Activated CD8-positive, alpha-beta T cell treated with anti-CD3 and anti-CD28 coated beads, Interleukin-2, amount 10 ng/mL, durations not matched to agents 7 days and 5 days (primary cell): ENCODE measurements at regions of chr17 and their contacts with region 1.

Region 1: DNA sequence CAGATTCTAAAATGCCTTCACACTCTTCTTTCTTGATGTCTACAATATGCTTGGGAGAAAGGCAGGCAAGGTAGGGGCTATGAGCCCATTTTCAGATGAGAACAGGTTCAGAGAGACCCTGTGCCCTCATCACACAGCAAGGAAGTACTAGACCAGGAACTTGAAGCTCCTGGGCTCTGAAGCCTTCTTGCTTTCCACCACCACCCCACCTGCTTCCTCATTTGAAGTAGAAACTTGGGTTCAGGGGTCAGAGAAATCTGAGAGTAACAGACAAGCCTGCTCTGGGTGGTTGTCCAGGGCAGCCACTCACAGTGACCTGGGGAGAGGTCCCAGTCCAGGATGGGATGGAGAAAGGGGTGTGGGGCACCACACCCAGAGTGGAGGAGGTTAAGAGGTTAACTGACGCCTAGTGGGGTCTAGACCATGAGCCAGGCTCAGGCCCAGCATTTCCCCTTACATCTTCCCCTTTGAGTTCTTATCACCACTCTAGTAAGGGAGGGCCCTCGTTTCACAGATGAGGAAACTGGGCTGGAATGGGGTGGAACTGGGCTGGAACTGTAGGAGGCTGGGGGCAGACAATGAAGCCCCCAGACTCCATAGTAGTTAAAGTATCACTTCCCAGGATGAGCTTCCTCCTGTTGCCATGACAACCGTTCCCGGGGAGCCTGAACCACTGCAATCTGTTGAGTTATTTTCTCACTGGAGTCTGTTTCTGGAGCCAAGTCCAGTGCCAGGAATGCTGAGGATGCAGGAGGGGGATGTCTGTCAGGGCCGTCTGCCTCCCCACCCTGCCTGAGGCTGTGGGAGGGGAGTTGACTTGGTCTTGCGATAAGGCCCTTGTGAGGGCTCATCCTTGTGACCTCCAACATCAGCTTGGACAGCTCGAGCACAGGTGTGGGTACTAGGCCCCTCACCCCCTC is 16.2 kb upstream of the PHF12 start:
- DNase-seq: no peak
- ATAC-seq: no peak
- H3K4me3 Mint-ChIP-seq: no peak overlapping the region
- H3K27ac Mint-ChIP-seq: peak overlapping the region; percentile 51
- H3K4me1 Mint-ChIP-seq: peaks cover 4% of the 10 kb centered on the region
- H3K27me3 Mint-ChIP-seq: peaks cover 15% of the 10 kb centered on the region

Region 2: DNA sequence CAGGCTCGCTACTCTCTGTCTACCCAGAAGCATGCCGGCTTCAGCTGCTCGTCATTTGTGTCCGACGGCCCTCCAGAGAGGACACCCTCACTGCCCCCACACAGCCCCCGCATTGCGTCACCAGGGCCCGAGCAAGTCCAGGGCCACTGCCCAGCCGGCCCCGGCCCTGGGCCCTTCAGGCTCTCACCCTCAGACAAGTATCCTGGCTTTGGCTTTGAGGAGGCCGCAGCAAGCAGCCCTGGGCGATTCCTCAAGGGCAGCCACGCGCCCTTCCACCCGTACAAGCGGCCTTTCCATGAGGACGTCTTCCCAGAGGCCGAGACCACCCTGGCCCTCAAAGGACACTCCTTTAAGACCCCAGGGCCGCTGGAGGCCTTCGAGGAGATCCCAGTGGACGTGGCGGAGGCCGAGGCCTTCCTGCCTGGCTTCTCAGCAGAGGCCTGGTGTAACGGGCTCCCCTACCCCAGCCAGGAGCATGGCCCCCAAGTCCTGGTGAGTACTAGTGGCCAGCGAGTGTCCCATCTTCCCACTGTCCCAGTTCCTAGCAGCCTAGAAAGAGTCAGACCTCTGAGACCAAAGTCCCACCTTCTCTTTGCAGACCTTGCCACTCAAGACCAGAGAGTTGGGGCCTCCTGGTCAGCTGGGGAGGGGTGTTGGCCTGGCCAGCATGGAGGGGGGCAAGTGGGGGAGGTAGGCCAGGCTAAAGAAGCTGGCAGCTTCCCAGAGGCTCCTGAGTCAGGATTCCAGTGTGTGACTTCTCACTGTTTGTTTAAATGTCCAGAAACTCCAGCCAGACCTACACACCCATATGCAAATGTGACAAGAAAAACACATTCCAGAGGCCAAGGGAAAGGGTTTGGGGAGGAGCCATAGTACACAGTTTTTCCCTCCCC is 442.8 kb before region 1 on chr17:
- CTCF ChIA-PET with region 1: no interaction called
- POLR2A ChIA-PET with region 1: no interaction called
- DNase-seq: no peak
- ATAC-seq: no peak
- H3K4me3 Mint-ChIP-seq: no peak overlapping the region
- H3K27ac Mint-ChIP-seq: no peak overlapping the region
- H3K4me1 Mint-ChIP-seq: no peaks in the 10 kb centered on the region
- H3K27me3 Mint-ChIP-seq: no peaks in the 10 kb centered on the region

Region 3: DNA sequence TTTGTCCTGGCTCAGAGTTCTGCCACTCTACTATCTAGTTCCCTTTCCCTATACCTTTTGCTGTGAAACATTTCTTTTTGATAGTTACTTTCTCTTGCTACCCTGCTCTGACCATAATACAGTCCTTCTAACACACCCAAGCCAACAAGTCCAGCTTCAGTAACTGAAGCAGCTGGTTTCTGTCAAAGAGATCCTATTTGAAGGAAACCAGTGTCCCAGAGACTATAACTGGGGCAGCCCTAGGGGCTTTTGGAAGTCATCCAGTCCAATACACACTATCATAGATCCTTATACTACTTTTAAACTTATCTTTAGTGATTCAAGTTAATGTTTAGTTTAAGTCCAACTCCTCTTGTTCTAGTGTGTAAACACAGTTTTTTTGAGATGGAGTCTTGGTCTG is 47.3 kb before region 1 on chr17:
- CTCF ChIA-PET with region 1: no interaction called
- POLR2A ChIA-PET with region 1: no interaction called
- DNase-seq: no peak
- ATAC-seq: no peak
- H3K4me3 Mint-ChIP-seq: no peak overlapping the region
- H3K27ac Mint-ChIP-seq: peak overlapping the region; percentile 1
- H3K4me1 Mint-ChIP-seq: peaks cover 16% of the 10 kb centered on the region
- H3K27me3 Mint-ChIP-seq: no peaks in the 10 kb centered on the region

Region 4: DNA sequence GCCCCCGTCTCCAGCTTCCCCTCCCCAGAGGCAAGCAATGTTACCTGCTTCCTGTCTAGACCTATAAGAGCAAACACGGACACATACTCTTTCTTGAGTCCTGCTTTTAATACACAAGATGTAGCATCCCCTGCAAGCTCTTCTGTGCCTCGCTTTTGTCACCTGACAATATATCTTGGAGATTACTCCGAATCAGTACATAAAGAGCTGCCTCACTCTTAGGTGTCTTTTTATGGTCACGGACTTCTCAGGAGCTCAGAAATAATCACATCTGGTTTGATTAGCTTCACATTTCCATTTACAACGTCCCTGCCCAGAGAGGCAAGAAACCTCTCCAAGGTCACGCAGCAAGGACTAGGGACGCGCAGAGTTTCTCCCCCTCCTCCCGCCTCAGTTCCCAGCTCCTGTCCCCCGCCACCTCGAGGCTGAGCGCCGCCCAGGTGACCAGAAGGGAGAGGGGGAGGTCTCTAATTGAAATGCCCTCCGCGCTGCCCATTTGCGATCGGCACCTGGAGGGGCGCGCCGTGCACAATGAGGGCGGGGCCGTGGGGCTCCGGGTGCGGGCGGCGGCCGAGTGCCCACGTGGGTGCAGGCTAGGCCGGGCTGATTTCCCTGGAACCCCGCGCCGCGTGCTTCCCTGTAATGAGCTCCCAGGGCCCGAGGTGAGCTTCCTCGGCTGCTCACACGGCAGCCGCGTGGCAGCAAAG is 52.1 kb after region 1 on chr17:
- CTCF ChIA-PET with region 1: interaction called, 16 read pairs
- POLR2A ChIA-PET with region 1: no interaction called
- DNase-seq: no peak
- ATAC-seq: peak; percentile 52
- H3K4me3 Mint-ChIP-seq: no peak overlapping the region
- H3K27ac Mint-ChIP-seq: no peak overlapping the region
- H3K4me1 Mint-ChIP-seq: peaks cover 8% of the 10 kb centered on the region
- H3K27me3 Mint-ChIP-seq: peaks cover 38% of the 10 kb centered on the region

Region 5: DNA sequence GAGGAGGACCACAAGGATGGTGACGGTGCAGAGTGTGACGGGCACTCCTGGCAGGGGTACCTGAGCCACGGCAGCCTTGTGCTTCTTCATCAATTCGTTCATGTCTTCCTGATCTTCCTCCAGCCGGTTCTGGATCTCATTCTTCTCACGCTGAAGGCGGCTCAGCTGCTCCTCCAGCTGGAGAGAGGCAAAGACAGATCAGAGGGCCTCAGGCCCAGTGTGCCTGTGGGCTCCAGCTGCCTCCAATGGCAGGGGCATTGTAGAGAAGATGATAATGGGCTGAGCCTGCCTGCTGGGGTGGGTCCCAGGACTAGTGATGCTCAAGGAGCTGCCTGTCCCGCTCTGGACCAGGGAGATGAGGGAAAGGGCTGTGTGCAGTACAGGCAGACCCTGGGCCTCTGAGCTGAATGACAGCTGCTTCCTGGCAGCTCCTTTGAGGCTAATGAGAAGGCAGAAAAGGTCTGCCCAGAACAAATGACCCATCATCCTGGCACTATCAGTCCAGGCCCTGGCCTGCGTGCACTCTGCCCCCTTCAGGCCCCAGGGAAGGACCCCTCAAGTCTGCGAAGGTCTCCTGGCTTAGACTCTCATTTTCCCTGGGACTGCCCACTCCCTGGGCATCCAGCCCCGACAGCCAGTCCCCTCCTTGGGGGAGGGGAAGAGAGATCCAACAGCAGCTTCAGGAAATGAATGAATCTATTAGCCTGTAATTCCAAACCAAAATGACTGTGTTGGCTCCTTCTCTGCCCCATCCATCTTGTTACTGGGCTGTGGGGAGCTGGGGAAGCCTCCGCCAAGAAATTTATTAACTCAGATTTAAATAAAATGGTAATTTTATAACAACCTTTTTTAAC is 123.5 kb after region 1 on chr17:
- CTCF ChIA-PET with region 1: interaction called, 11 read pairs
- POLR2A ChIA-PET with region 1: no interaction called
- DNase-seq: no peak
- ATAC-seq: no peak
- H3K4me3 Mint-ChIP-seq: no peak overlapping the region
- H3K27ac Mint-ChIP-seq: no peak overlapping the region
- H3K4me1 Mint-ChIP-seq: no peaks in the 10 kb centered on the region
- H3K27me3 Mint-ChIP-seq: no peaks in the 10 kb centered on the region

Region 6: DNA sequence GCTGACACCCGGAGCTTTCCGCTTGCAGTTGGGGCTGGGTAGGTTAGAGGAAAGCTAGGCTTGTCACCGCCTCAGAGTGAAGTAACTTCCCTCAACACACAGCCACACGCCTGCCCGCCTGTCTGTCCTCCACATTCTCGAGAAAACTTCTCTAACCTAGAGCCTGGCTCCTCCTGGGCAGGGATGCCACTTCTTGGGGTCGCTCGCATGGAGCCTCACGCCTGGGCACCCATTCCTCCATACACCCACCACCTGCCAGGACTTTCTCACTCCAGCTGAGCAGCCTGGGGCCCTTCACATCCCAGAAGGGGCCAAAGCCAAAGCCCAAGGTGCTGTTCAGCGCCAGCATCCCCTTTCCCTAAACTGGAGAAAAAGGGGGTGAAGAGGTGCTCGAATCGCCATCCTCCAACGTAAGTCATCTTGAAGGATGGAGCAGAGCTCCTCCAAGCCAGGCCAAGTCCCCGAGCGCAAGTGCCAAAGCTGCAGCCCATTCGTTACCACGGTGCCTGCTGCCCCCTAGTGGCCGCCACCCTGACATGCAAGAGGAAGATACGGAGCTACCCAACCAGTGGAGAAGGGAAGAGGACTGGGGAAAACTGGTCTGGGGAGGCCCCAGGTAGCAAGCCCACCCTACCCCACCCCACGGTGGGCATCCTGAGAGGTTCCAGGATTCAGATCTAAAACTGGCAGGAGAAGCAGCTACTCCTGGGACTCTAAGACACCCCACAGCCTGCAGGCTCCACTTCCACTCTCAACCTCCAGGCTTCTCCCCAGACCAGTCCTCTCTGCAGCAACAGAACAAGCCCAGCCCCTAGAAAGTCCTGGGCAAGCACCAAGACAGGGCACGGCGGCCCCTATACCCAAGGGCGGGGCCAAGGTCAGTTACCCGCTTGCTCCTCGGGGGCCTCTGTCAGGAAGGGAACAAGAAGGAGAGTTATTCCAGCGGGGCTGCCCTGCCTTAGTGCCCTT is 149.6 kb after region 1 on chr17:
- CTCF ChIA-PET with region 1: interaction called, 194 read pairs
- POLR2A ChIA-PET with region 1: no interaction called
- DNase-seq: peak; percentile 81
- ATAC-seq: peak; percentile 59
- H3K4me3 Mint-ChIP-seq: no peak overlapping the region
- H3K27ac Mint-ChIP-seq: no peak overlapping the region
- H3K4me1 Mint-ChIP-seq: peaks cover 9% of the 10 kb centered on the region
- H3K27me3 Mint-ChIP-seq: no peaks in the 10 kb centered on the region

Region 7: GRCh38 chr17:29133146-29133713 is 165.7 kb after region 1 on chr17:
- CTCF ChIA-PET with region 1: interaction called, 15 read pairs
- POLR2A ChIA-PET with region 1: no interaction called
- DNase-seq: no peak
- ATAC-seq: peak; percentile 15
- H3K4me3 Mint-ChIP-seq: no peak overlapping the region
- H3K27ac Mint-ChIP-seq: peak overlapping the region; percentile 20
- H3K4me1 Mint-ChIP-seq: peaks cover 52% of the 10 kb centered on the region
- H3K27me3 Mint-ChIP-seq: no peaks in the 10 kb centered on the region